RWPE1 (cell line): ENCODE measurements at regions of chr5 and their contacts with region 1.

Region 1: GRCh38 chr5:90793183-90793582 is 234.6 kb downstream of the ADGRV1 start:
- DNase-seq: no peak
- H3K27ac ChIP-seq: no peak overlapping the region
- CTCF ChIP-seq: peak; percentile 28; the same call in 1 of the 2 replicates

Region 2: DNA sequence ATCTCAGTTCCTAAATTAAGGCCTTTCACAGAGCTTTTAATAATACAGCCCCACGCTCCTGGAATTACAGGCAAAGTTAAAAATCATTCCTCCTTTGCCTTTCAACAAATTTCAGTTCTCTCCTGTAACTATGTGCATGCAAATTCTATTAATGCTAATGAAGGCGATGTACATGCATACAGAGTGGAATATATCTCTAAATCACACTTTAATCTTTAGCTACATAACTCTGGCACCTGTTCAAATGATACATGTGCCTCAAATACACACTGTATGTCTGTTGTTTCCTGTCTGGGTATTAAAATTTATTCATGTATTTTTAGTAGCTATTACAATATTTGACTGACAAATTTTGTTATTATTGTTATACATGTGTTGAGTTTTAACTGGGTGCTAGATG is 414.4 kb before region 1 on chr5:
- CTCF ChIA-PET with region 1: no interaction called
- POLR2A ChIA-PET with region 1: interaction called, 11 read pairs
- DNase-seq: no peak
- H3K27ac ChIP-seq: no peak overlapping the region
- CTCF ChIP-seq: no peak